ENCODE measurements at regions of chr2 and their contacts with region 1.

Region 1: GRCh38 chr2:127625081-127625943 is 20.6 kb upstream of the GPR17 start:
- DNase-seq: no peak
- H3K4me3 ChIP-seq: no peak overlapping the region
- H3K27ac ChIP-seq: no peak overlapping the region
- H3K4me1 ChIP-seq: no peaks in the 10 kb centered on the region
- H3K27me3 ChIP-seq: no peaks in the 10 kb centered on the region
- CTCF ChIP-seq: no peak
- EP300 ChIP-seq: no peak
- POLR2A ChIP-seq: no peak
- RAD21 ChIP-seq: no peak

Region 2: DNA sequence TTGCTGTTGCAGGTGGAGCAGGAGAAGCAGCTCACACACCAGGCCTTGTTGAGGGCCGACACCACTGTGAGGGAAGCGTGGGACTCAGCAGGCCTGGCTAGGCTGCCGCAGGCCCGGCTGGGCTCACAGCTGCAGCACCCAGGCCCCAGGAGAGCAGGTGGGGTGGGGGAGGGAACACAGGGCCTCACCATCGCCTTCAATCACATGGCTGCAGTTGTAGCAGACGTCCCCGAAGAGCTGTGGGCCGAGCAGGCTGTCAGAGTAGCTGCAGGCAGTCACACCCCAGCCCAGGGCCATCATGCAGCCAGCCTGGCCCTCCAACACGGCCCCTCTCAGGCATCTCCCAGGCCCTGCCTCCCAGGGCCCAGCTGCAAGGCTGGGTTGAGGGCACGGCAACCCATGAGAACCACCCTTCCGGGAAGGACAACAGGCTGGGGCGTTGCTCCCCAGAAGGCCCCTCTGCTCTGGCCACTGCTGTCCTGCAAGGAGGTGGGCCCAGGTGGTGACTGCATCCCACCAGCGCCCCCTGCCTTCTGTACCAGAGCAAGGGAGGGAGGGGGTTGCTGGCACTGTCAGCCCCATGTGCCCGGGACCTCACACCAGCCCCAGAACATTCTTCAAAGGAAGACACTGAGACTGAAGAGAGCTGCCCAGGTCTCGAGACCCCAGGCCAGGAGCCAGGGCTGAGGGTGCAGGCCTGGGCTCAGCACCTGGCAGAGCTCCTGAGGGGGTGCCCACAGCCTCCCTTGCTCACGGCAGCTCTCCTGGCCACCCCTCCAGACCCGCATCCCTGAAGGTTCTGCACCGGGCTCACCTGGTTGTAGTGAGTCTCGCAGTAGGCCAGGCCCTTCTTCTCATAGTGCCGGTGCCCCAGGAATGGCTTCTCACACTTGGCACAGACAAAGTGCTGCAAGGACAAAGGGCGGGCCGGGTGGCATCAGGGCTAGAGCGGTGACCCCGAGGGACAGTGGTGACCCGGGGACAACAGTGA is 15.1 kb after region 1 on chr2:
- CTCF ChIA-PET with region 1: interaction called, 50 read pairs
- POLR2A ChIA-PET with region 1: no interaction called
- DNase-seq: peak in 1 of 2 experiments; percentile 75
- H3K4me3 ChIP-seq: no peak overlapping the region
- H3K27ac ChIP-seq: no peak overlapping the region
- H3K4me1 ChIP-seq: peaks cover 0 to 19% (median 7%) of the 10 kb centered on the region in 4 experiments; a peak in 6 of 7 replicates
- H3K27me3 ChIP-seq: no peaks in the 10 kb centered on the region
- CTCF ChIP-seq: peak in 2 of 3 experiments; percentile 61 to 79; a peak in 3 of 4 replicates
- EP300 ChIP-seq: no peak
- POLR2A ChIP-seq: no peak
- RAD21 ChIP-seq: peak; percentile 66 to 73

Measured in H1 (cell line).